ENCODE measurements at regions of chr19 and their contacts with region 1.

Region 1: DNA sequence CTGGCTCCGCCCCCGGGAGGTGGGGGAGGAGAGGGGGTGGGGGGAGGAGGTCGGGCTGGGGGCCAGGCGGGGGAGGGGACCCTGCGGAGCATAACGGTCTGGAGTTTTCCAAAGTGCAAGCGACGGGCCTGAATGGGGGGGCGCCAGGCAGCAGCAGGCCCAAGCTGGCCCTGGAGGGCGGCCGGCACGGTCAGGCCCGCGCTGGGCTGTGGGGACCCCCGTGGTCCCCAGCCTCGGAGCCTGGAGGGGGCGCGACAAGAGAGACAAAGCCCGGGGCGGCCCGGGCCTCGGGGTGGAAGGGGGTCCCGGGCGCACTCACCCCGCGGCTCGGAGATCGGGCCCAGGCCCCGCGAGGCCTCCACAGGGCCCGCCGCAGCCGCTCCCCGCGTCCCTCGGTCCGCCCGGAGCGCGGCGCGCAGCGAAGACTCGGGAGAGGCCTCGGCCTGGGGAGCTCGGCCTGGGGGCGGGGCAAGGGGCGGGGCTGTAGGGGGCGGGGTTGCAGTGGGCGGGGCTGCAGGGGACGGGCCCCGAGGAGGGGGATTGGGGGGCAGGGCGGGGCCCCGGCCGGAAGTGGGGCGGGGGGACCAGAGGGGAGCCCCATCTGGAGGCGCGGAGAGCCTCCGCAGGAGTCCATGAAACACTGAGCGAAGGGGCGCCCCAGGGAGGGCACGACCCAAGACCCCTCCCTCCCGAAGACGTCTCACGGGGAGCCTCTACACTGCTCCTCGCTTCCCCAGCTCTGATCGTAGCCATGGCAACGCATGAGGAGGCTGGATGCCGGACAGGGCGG is 47.6 kb downstream of the PTPRS start:
- DNase-seq: peak; percentile 76 to 98 (median 97)
- ATAC-seq: peak; percentile 93
- H3K4me3 ChIP-seq: peak overlapping the region; percentile 72
- H3K27ac ChIP-seq: peak overlapping the region; percentile 86
- H3K4me1 ChIP-seq: peaks cover 22 to 63% of the 10 kb centered on the region in 2 experiments
- H3K27me3 ChIP-seq: peaks cover 0 to 9% of the 10 kb centered on the region in 2 experiments; a peak in 1 of 5 replicates
- CTCF ChIP-seq: no peak
- EP300 ChIP-seq: no peak
- POLR2A ChIP-seq: no peak; the same call in 1 of the 2 replicates
- RAD21 ChIP-seq: no peak; a peak in 1 of 4 replicates

Region 2: GRCh38 chr19:5205381-5205780 is 87.6 kb before region 1 on chr19:
- CTCF ChIA-PET with region 1: no interaction called
- POLR2A ChIA-PET with region 1: no interaction called
- in situ Hi-C with region 1: no loop called
- intact Hi-C with region 1: no loop called
- DNase-seq: no peak
- ATAC-seq: no peak
- H3K4me3 ChIP-seq: no peak overlapping the region
- H3K27ac ChIP-seq: no peak overlapping the region
- H3K4me1 ChIP-seq: no peaks in the 10 kb centered on the region; a peak in 1 of 5 replicates
- H3K27me3 ChIP-seq: no peaks in the 10 kb centered on the region
- CTCF ChIP-seq: no peak
- EP300 ChIP-seq: no peak
- POLR2A ChIP-seq: no peak
- RAD21 ChIP-seq: no peak

Region 3: GRCh38 chr19:5281588-5281987 is 11.4 kb before region 1 on chr19:
- CTCF ChIA-PET with region 1: no interaction called
- POLR2A ChIA-PET with region 1: interaction called, 15 read pairs
- in situ Hi-C with region 1: no loop called
- intact Hi-C with region 1: no loop called
- DNase-seq: no peak
- ATAC-seq: no peak
- H3K4me3 ChIP-seq: no peak overlapping the region
- H3K27ac ChIP-seq: no peak overlapping the region
- H3K4me1 ChIP-seq: no peaks in the 10 kb centered on the region; a peak in 1 of 5 replicates
- H3K27me3 ChIP-seq: no peaks in the 10 kb centered on the region
- CTCF ChIP-seq: no peak
- EP300 ChIP-seq: no peak
- POLR2A ChIP-seq: no peak
- RAD21 ChIP-seq: no peak

Region 4: DNA sequence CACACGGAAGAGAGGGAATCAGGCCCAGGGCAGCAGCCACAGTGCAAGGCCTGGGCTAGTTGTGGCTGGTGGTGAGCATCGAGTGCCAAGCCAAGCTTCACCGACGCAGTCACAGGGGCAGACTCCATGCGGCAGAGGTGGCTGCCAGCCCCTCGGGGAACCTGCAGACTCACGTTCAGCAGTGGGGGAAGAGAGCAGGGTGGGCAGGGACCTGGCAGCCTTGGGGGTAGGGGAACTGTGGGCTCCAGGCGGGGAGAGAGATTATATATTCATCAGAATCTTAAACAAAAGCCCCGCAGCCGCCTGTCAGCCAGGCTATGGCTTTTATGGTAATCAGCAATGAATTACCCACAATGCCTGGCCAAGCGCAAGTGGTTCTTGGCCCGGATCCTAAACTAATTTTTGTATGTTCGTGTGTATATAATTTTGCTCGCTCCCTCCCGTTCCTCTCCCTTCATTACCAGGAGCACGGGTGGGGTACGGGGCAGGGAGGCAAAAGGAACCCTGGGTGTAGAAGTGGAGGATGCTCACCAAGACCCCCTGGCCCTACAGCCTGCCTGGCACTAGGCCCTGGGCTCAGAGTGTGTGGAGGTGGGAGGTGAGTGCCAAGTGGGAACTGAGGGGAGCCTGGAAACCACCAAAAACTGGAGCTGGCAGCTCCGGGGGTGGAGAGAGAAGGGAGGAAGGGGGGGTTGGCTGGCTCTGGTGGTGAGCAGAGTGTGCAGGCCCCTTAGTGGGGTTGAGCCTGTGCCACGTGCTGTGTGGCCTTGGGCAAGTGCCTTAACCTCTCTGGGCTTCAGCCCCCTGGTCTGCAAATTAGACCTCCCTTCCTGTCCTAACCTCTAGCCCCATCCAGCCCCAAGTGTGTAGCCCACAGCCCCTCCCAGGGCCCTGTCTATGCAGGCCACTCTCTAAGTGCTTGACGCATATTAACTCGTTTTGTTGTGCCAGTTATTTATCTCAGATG is 15.7 kb after region 1 on chr19:
- CTCF ChIA-PET with region 1: no interaction called
- POLR2A ChIA-PET with region 1: interaction called, 11 read pairs
- in situ Hi-C with region 1: no loop called
- intact Hi-C with region 1: no loop called
- DNase-seq: peak; percentile 47 to 64 (median 56)
- ATAC-seq: peak; percentile 89
- H3K4me3 ChIP-seq: no peak overlapping the region
- H3K27ac ChIP-seq: peak overlapping the region; percentile 69; the same call in 2 of the 3 replicates
- H3K4me1 ChIP-seq: peaks cover 3 to 9% of the 10 kb centered on the region in 2 experiments; a peak in 3 of 5 replicates
- H3K27me3 ChIP-seq: no peaks in the 10 kb centered on the region; a peak in 1 of 5 replicates
- CTCF ChIP-seq: no peak
- EP300 ChIP-seq: no peak
- POLR2A ChIP-seq: peak; percentile 97
- RAD21 ChIP-seq: no peak

Region 5: GRCh38 chr19:5394551-5395505 is 101.8 kb after region 1 on chr19:
- CTCF ChIA-PET with region 1: no interaction called
- POLR2A ChIA-PET with region 1: no interaction called
- in situ Hi-C with region 1: no loop called
- intact Hi-C with region 1: no loop called
- DNase-seq: no peak
- ATAC-seq: no peak
- H3K4me3 ChIP-seq: no peak overlapping the region
- H3K27ac ChIP-seq: no peak overlapping the region
- H3K4me1 ChIP-seq: no peaks in the 10 kb centered on the region; a peak in 2 of 5 replicates
- H3K27me3 ChIP-seq: peaks cover 4 to 6% of the 10 kb centered on the region in 2 experiments; a peak in 2 of 5 replicates
- CTCF ChIP-seq: no peak
- EP300 ChIP-seq: no peak
- POLR2A ChIP-seq: no peak
- RAD21 ChIP-seq: no peak

Measured in K562 (cell line).